CD4-positive, alpha-beta memory T cell (primary cell): ENCODE measurements at regions of chr4 and their contacts with region 1.

Region 1: GRCh38 chr4:121192480-121192879 is 28.4 kb upstream of the TNIP3 start:
- DNase-seq: peak in 3 of 5 donors; percentile 33 to 47 (median 46)
- H3K4me3 ChIP-seq: no peak overlapping the region
- H3K4me3 Mint-ChIP-seq: peak overlapping the region; percentile 40 to 83 (median 73)
- H3K27ac ChIP-seq: no peak overlapping the region
- H3K27ac Mint-ChIP-seq: peak overlapping the region in 4 of 7 donors; percentile 0 to 79 (median 60)
- H3K4me1 ChIP-seq: peaks cover 53% of the 10 kb centered on the region
- H3K4me1 Mint-ChIP-seq: peaks cover 37 to 51% (median 44%) of the 10 kb centered on the region in 4 donors
- H3K27me3 ChIP-seq: no peaks in the 10 kb centered on the region
- H3K27me3 Mint-ChIP-seq: no peaks in the 10 kb centered on the region

Region 2: GRCh38 chr4:121112530-121112929 is 80.0 kb before region 1 on chr4:
- CTCF ChIA-PET with region 1: interaction called, 22 read pairs
- POLR2A ChIA-PET with region 1: no interaction called
- intact Hi-C with region 1: loop called (anchors 5 kb)
- DNase-seq: no peak
- H3K4me3 ChIP-seq: no peak overlapping the region
- H3K4me3 Mint-ChIP-seq: no peak overlapping the region
- H3K27ac ChIP-seq: no peak overlapping the region
- H3K27ac Mint-ChIP-seq: no peak overlapping the region
- H3K4me1 ChIP-seq: no peaks in the 10 kb centered on the region
- H3K4me1 Mint-ChIP-seq: peaks cover 0 to 5% (median 2%) of the 10 kb centered on the region in 4 donors
- H3K27me3 ChIP-seq: no peaks in the 10 kb centered on the region
- H3K27me3 Mint-ChIP-seq: peaks cover 0 to 2% of the 10 kb centered on the region in 2 donors

Region 3: GRCh38 chr4:121150486-121150885 is 42.0 kb before region 1 on chr4:
- CTCF ChIA-PET with region 1: interaction called, 38 read pairs
- POLR2A ChIA-PET with region 1: interaction called, 15 read pairs
- intact Hi-C with region 1: loop called (anchors 5 kb)
- DNase-seq: no peak
- H3K4me3 ChIP-seq: no peak overlapping the region
- H3K4me3 Mint-ChIP-seq: no peak overlapping the region
- H3K27ac ChIP-seq: no peak overlapping the region
- H3K27ac Mint-ChIP-seq: peak overlapping the region in 1 of 7 donors; percentile 26
- H3K4me1 ChIP-seq: peaks cover 40% of the 10 kb centered on the region
- H3K4me1 Mint-ChIP-seq: peaks cover 30 to 60% (median 44%) of the 10 kb centered on the region in 4 donors
- H3K27me3 ChIP-seq: no peaks in the 10 kb centered on the region
- H3K27me3 Mint-ChIP-seq: no peaks in the 10 kb centered on the region

Region 4: DNA sequence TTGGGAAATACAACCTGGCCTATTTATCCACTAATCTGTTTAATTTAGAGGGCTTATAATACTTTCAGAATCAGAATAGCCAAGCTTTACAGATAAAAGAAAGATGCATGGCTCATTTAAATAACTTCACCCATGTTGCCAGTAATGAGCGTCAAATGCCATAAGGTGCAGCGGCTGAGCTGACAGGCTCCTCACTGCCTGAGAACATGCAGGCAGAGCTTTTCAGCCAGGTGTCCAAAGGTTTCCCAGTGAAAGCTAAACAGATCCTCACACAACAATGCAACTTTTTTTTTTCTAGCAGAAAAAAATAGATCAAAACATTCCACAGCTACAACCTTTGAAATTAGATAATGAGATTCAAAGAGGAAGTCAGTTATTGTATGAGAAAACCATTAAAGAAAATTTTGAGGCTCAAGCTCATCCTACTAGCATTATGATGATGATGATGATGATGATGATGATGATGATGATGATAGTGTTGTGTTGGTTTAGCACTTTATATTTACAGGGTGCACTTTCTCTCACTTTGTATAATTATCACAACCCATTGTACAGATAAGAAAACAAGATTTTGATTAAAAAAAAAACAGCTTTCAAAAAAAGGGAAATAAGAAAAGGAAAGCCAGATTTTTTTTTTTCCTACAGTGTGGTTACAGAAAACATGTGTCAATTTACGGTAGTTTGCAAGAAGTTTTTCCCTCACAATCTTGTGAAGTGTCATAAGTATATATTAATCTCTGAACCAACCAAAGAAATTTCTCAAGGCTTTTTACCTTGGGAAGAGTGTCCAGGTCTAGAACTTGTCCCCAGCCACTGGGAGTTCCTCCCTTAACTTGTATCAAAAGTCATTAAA is 16.2 kb before region 1 on chr4:
- CTCF ChIA-PET with region 1: interaction called, 14 read pairs
- POLR2A ChIA-PET with region 1: interaction called, 13 read pairs
- intact Hi-C with region 1: no loop called
- DNase-seq: no peak
- H3K4me3 ChIP-seq: no peak overlapping the region
- H3K4me3 Mint-ChIP-seq: peak overlapping the region in 5 of 8 donors; percentile 10 to 66 (median 47)
- H3K27ac ChIP-seq: no peak overlapping the region
- H3K27ac Mint-ChIP-seq: peak overlapping the region in 2 of 7 donors; percentile 14 to 66
- H3K4me1 ChIP-seq: peaks cover 56% of the 10 kb centered on the region
- H3K4me1 Mint-ChIP-seq: peaks cover 51 to 65% (median 60%) of the 10 kb centered on the region in 4 donors
- H3K27me3 ChIP-seq: no peaks in the 10 kb centered on the region
- H3K27me3 Mint-ChIP-seq: no peaks in the 10 kb centered on the region

Region 5: GRCh38 chr4:121252224-121252806 is 59.8 kb after region 1 on chr4:
- CTCF ChIA-PET with region 1: interaction called, 203 read pairs
- POLR2A ChIA-PET with region 1: interaction called, 11 read pairs
- intact Hi-C with region 1: loop called (anchors 1 kb)
- DNase-seq: peak in 4 of 5 donors; percentile 33 to 50 (median 44)
- H3K4me3 ChIP-seq: no peak overlapping the region
- H3K4me3 Mint-ChIP-seq: no peak overlapping the region
- H3K27ac ChIP-seq: no peak overlapping the region
- H3K27ac Mint-ChIP-seq: peak overlapping the region in 4 of 7 donors; percentile 14 to 63 (median 47)
- H3K4me1 ChIP-seq: peaks cover 47% of the 10 kb centered on the region
- H3K4me1 Mint-ChIP-seq: peaks cover 37 to 49% (median 43%) of the 10 kb centered on the region in 4 donors
- H3K27me3 ChIP-seq: no peaks in the 10 kb centered on the region
- H3K27me3 Mint-ChIP-seq: no peaks in the 10 kb centered on the region

Region 6: GRCh38 chr4:121726642-121727268 is 534.3 kb after region 1 on chr4:
- CTCF ChIA-PET with region 1: interaction called, 10 read pairs
- POLR2A ChIA-PET with region 1: no interaction called
- intact Hi-C with region 1: loop called (anchors 1 kb)
- DNase-seq: peak in 4 of 5 donors; percentile 42 to 59 (median 50)
- H3K4me3 ChIP-seq: no peak overlapping the region
- H3K4me3 Mint-ChIP-seq: no peak overlapping the region
- H3K27ac ChIP-seq: no peak overlapping the region
- H3K27ac Mint-ChIP-seq: no peak overlapping the region
- H3K4me1 ChIP-seq: no peaks in the 10 kb centered on the region
- H3K4me1 Mint-ChIP-seq: peaks cover 0 to 2% (median 0%) of the 10 kb centered on the region in 4 donors
- H3K27me3 ChIP-seq: no peaks in the 10 kb centered on the region
- H3K27me3 Mint-ChIP-seq: peaks cover 0 to 2% of the 10 kb centered on the region in 2 donors